ENCODE measurements at regions of chr11 and their contacts with region 1.

Region 1: GRCh38 chr11:122754553-122755322 is 83.6 kb upstream of the CRTAM start:
- DNase-seq: peak; percentile 82
- H3K4me3 ChIP-seq: no peak overlapping the region
- H3K27ac ChIP-seq: peak overlapping the region; percentile 70
- H3K4me1 ChIP-seq: peaks cover 71% of the 10 kb centered on the region
- CTCF ChIP-seq: peak; percentile 88

Region 2: DNA sequence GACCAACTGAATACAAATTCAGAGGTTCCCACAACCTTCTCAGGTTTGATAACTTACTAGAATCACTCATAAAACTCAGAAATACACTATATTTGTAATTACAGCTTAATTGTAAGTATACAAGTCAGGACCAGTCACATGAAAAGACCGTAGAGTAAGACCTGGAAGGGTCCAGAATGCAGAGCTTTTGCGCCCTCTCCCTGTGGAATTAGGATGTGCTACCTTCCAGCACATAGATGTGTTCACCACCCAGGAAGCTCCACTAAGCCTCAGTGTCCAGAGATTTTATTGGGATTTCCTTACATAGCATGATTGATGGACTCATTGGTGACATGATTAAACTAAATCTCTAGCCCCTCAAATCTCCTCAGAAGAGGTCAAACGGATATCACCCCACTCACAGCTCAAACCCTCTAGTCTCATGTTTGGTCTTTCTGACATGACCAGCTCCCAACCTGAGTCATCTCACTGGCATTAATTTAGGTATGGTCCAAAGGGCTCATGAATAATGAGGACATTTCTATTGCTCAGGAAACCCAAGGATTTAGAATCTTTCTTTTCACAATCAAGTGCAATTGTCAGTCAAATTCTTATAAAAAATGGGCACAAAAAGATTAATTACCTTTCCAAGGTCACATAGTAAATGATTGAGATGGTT is 176.4 kb before region 1 on chr11:
- CTCF ChIA-PET with region 1: no interaction called
- POLR2A ChIA-PET with region 1: interaction called, 3 read pairs
- intact Hi-C with region 1: loop called (anchors 2 kb)
- DNase-seq: peak; percentile 6
- H3K4me3 ChIP-seq: no peak overlapping the region
- H3K27ac ChIP-seq: no peak overlapping the region
- H3K4me1 ChIP-seq: peaks cover 3% of the 10 kb centered on the region
- CTCF ChIP-seq: peak; percentile 54

Region 3: DNA sequence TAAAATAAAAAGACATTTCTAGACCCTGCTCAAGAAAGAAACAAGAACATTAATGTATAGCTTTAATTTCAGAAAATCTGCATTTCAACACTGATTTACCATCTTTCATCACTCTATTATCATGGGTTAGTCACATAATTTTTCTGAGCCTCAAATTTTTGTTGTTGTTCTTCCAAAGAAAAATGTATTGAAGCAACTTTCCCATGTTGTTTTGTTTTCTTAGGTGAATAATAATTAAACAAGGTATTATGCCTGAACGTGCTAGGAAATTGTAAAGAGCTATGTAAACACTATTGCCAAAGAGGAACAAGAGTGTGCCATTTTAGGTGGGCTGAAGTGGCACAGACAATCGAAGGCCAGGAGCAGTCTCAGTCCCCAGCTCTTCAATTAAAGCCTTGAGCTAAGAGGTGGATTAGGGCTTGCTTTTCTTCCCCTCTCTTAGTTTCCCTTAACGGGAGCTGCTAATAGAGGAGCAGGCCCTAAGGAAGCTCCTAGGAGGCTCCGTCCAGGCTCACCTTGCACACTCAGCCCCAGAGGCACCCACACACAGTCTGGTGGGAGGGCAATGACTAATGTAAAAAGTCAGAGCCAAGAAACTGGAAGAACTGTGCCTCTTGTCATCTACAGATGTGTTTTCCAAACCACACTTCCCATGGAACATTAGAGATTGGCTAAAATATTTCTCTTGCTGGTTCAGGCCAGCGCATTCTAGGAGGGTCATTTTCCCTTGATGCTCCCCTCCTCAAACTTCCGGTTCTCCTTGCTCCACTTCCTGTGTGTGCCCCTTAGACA is 108.0 kb before region 1 on chr11:
- CTCF ChIA-PET with region 1: interaction called, 14 read pairs
- POLR2A ChIA-PET with region 1: interaction called, 10 read pairs
- intact Hi-C with region 1: no loop called
- DNase-seq: no peak
- H3K4me3 ChIP-seq: no peak overlapping the region
- H3K27ac ChIP-seq: no peak overlapping the region
- H3K4me1 ChIP-seq: peaks cover 15% of the 10 kb centered on the region
- CTCF ChIP-seq: no peak

Region 4: GRCh38 chr11:122668562-122669090 is 86.1 kb before region 1 on chr11:
- CTCF ChIA-PET with region 1: interaction called, 9 read pairs
- POLR2A ChIA-PET with region 1: interaction called, 56 read pairs
- intact Hi-C with region 1: loop called (anchors 1 kb)
- DNase-seq: peak; percentile 87
- H3K4me3 ChIP-seq: peak overlapping the region; percentile 47
- H3K27ac ChIP-seq: peak overlapping the region; percentile 93
- H3K4me1 ChIP-seq: peaks cover 99% of the 10 kb centered on the region
- CTCF ChIP-seq: no peak

Region 5: DNA sequence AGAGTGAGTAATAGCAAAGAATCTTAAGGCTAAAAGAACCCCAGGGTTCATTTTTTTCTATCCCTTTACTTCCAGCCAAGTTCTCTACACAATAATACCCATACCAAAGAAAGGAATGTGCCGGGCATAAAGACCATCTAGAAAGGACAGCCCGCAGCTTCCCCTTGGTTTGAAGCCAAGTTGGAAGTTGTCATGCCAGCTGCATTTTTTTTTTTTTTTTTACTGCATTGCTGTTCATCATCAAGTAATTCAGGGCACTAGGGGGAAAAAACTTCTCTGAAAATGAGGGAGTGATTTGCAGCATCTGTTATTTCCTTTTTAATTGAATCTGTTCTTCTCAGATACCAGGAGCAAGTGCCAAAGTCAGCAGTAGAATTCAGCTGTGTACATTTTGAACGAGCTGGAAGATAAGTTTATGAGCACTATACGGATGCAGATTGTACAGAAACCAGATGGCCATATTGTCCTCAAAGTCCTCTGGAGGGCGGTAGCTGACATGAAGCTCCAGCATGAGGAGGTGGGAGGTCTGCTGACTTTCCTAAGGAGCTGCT is 42.8 kb before region 1 on chr11:
- CTCF ChIA-PET with region 1: interaction called, 9 read pairs
- POLR2A ChIA-PET with region 1: interaction called, 13 read pairs
- intact Hi-C with region 1: loop called (anchors 1 kb)
- DNase-seq: peak; percentile 45
- H3K4me3 ChIP-seq: no peak overlapping the region
- H3K27ac ChIP-seq: peak overlapping the region; percentile 35
- H3K4me1 ChIP-seq: peaks cover 78% of the 10 kb centered on the region
- CTCF ChIP-seq: peak; percentile 58

Region 6: DNA sequence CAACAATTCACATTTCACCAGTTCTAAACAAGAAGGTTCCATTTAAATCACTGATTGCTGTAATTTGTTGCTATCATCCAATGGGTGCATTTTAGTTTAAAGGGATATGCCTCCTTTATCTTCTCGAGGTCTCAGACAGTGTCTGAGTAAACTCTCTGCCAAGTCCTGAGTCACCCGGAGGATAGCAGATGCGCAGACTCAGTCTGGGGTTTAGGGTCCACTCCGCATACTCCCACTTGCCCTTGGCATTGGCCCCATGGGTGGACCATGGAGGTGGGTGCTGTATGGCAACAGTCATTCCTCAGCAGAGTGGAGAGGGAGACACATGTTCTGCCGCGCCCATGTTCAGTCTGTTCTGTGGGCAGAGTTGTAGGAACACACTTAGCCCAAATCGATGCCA is 18.2 kb after region 1 on chr11:
- CTCF ChIA-PET with region 1: interaction called, 7 read pairs
- POLR2A ChIA-PET with region 1: interaction called, 11 read pairs
- intact Hi-C with region 1: no loop called
- DNase-seq: no peak
- H3K4me3 ChIP-seq: no peak overlapping the region
- H3K27ac ChIP-seq: no peak overlapping the region
- H3K4me1 ChIP-seq: peaks cover 14% of the 10 kb centered on the region
- CTCF ChIP-seq: no peak

Region 7: DNA sequence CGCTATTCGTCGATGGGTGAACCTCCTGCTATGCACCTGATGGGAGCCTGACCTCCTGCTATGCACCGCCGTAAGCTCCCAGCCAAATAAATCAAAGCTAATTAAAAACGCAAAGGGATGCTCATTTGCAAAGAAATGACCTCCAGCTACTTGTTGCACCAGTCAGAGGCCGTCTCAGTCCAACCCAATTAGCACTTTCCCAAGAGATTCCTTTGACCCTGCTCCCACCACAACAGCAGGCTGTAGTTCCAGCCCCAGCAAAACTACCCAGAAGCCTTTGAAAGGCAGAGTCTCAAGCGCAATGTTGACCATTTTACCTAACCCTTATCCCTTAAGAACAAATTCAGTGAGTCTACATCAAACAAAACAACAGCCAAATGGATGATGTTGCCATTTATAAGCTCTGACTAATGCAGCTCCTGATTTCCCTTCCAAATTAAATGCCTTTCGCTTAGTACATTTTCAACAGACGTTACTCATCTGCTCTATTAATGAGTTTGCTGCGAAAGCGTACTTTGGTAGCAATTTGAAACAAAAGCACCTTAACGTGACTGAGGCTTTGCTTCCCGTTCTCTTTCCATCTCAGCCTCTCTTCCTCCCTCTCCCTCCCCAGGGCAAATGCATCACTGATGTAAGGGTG is 244.1 kb after region 1 on chr11:
- CTCF ChIA-PET with region 1: no interaction called
- POLR2A ChIA-PET with region 1: no interaction called
- intact Hi-C with region 1: no loop called
- DNase-seq: no peak
- H3K4me3 ChIP-seq: no peak overlapping the region
- H3K27ac ChIP-seq: no peak overlapping the region
- H3K4me1 ChIP-seq: no peaks in the 10 kb centered on the region
- CTCF ChIP-seq: no peak

Region 8: GRCh38 chr11:123062158-123062891 is 307.6 kb after region 1 on chr11:
- CTCF ChIA-PET with region 1: no interaction called
- POLR2A ChIA-PET with region 1: interaction called, 3 read pairs
- intact Hi-C with region 1: loop called (anchors 10 kb)
- DNase-seq: peak; percentile 98
- H3K4me3 ChIP-seq: peak overlapping the region; percentile 96
- H3K27ac ChIP-seq: peak overlapping the region; percentile 92
- H3K4me1 ChIP-seq: peaks cover 53% of the 10 kb centered on the region
- CTCF ChIP-seq: no peak

Measured in OCI-LY7 (cell line).